ENCODE measurements at regions of chr9 and their contacts with region 1.

Region 1: DNA sequence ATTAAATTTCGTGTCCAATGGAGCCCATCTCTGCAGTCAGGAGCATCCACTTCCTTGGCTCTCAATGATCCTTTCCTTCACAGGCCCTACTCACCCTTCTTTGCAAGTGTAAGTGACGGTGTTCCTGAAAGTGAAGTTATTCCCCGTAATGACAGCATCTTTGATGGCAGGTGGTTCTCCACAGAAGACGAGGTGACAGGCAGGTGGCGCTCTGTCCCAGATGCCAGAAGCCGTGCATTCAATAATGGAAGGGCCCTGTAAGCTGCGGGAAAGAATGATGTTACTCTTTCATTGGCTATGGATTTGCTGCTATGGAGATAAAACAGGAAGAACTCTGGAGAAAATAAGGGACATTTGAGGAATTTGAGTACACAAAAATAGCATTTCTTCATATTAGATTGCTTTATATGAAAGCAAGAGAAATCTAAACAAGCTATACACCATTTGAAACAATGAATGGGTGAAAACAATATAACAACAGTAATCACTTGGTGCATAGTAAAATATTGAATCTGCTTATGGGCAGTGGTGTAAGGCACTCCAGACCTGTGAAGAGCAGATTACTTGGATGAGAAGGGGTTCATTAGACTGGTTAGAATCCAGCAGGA is 89.9 kb upstream of the TXNDC8 start:
- DNase-seq: peak in 1 of 2 experiments; percentile 43
- H3K4me3 ChIP-seq: no peak overlapping the region
- H3K27ac ChIP-seq: no peak overlapping the region
- H3K4me1 ChIP-seq: no peaks in the 10 kb centered on the region
- H3K27me3 ChIP-seq: no peaks in the 10 kb centered on the region
- CTCF ChIP-seq: peak; percentile 56

Region 2: GRCh38 chr9:111118256-111118948 is 690.8 kb after region 1 on chr9:
- CTCF ChIA-PET with region 1: interaction called, 10 read pairs
- POLR2A ChIA-PET with region 1: no interaction called
- intact Hi-C with region 1: no loop called
- DNase-seq: no peak
- H3K4me3 ChIP-seq: no peak overlapping the region
- H3K27ac ChIP-seq: no peak overlapping the region
- H3K4me1 ChIP-seq: no peaks in the 10 kb centered on the region
- H3K27me3 ChIP-seq: no peaks in the 10 kb centered on the region
- CTCF ChIP-seq: no peak